ENCODE measurements at regions of chr4 and their contacts with region 1.

Region 1: GRCh38 chr4:47221721-47222120 is 190.4 kb downstream of the GABRB1 start:
- DNase-seq: no peak
- H3K4me3 ChIP-seq: no peak overlapping the region
- H3K4me3 Mint-ChIP-seq: no peak overlapping the region
- H3K27ac Mint-ChIP-seq: no peak overlapping the region
- H3K4me1 ChIP-seq: peaks cover 38% of the 10 kb centered on the region
- H3K4me1 Mint-ChIP-seq: peaks cover 36% of the 10 kb centered on the region
- H3K27me3 ChIP-seq: no peaks in the 10 kb centered on the region
- H3K27me3 Mint-ChIP-seq: no peaks in the 10 kb centered on the region
- CTCF ChIP-seq: no peak

Region 2: GRCh38 chr4:47263721-47264120 is 42.0 kb after region 1 on chr4:
- CTCF ChIA-PET with region 1: no interaction called
- POLR2A ChIA-PET with region 1: no interaction called
- intact Hi-C with region 1: loop called (anchors 5 kb)
- DNase-seq: peak; percentile 53 to 59
- H3K4me3 ChIP-seq: no peak overlapping the region
- H3K4me3 Mint-ChIP-seq: peak overlapping the region; percentile 15
- H3K27ac Mint-ChIP-seq: peak overlapping the region; percentile 11
- H3K4me1 ChIP-seq: peaks cover 13% of the 10 kb centered on the region
- H3K4me1 Mint-ChIP-seq: peaks cover 26% of the 10 kb centered on the region
- H3K27me3 ChIP-seq: no peaks in the 10 kb centered on the region
- H3K27me3 Mint-ChIP-seq: no peaks in the 10 kb centered on the region
- CTCF ChIP-seq: no peak